GM10248 (cell line): ENCODE measurements at regions of chr1 and their contacts with region 1.

Region 1: GRCh38 chr1:160291248-160292220 is 6.6 kb upstream of the PEX19 start:
- DNase-seq: peak; percentile 64
- CTCF ChIP-seq: peak; percentile 75

Region 2: GRCh38 chr1:160161965-160162705 is 129.4 kb before region 1 on chr1:
- CTCF ChIA-PET with region 1: interaction called, 10 read pairs
- POLR2A ChIA-PET with region 1: no interaction called
- DNase-seq: peak; percentile 41
- CTCF ChIP-seq: peak; percentile 46

Region 3: GRCh38 chr1:160219062-160219929 is 72.2 kb before region 1 on chr1:
- CTCF ChIA-PET with region 1: interaction called, 10 read pairs
- POLR2A ChIA-PET with region 1: no interaction called
- DNase-seq: no peak
- CTCF ChIP-seq: no peak

Region 4: GRCh38 chr1:160251687-160252526 is 39.6 kb before region 1 on chr1:
- CTCF ChIA-PET with region 1: interaction called, 36 read pairs
- POLR2A ChIA-PET with region 1: no interaction called
- DNase-seq: peak; percentile 67
- CTCF ChIP-seq: peak; percentile 71

Region 5: GRCh38 chr1:160328184-160328583 is 36.6 kb after region 1 on chr1:
- CTCF ChIA-PET with region 1: interaction called, 28 read pairs
- POLR2A ChIA-PET with region 1: interaction called, 4 read pairs
- DNase-seq: no peak
- CTCF ChIP-seq: no peak

Region 6: GRCh38 chr1:160354388-160354985 is 63.0 kb after region 1 on chr1:
- CTCF ChIA-PET with region 1: interaction called, 11 read pairs
- POLR2A ChIA-PET with region 1: interaction called, 4 read pairs
- DNase-seq: no peak
- CTCF ChIP-seq: peak; percentile 40